Activated CD4-positive, alpha-beta T cell treated with anti-CD3 and anti-CD28 coated beads, Interleukin-2, amount 10 ng/mL, durations not matched to agents 24 days and 14 days (primary cell): ENCODE measurements at regions of chr17 and their contacts with region 1.

Region 1: DNA sequence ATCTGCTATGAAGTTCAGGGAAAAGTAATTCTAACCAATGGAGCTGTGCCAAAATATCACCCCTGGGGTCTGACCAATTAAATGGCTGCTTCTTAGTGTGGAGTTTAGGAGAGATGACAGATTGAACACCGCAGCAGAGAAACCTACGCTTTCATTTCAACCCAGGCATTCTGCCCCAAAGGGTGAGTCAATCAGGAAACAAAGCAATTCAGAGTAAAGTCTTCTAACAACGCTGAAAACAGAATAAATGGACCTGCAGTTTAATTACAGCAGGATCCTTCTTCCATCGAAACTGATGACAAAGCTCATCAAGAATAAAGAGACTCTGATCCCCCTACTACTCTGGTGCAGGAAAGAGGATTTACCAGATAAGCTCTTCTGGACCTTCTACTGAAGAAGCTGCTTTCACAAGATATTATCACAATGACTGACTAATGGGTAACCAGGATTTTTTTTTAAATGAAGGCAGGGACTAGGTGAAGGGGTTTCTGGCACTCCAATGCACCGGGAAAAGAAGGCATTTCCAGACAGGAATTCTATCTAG is 16.7 kb downstream of the RFFL start:
- DNase-seq: peak; percentile 91
- H3K4me3 Mint-ChIP-seq: peak overlapping the region; percentile 63
- H3K27ac Mint-ChIP-seq: peak overlapping the region; percentile 94
- H3K4me1 Mint-ChIP-seq: peaks cover 41% of the 10 kb centered on the region
- H3K27me3 Mint-ChIP-seq: no peaks in the 10 kb centered on the region

Region 2: GRCh38 chr17:35022536-35023063 is 24.2 kb before region 1 on chr17:
- intact Hi-C with region 1: loop called (anchors 1 kb)
- DNase-seq: peak; percentile 91
- H3K4me3 Mint-ChIP-seq: peak overlapping the region; percentile 64
- H3K27ac Mint-ChIP-seq: peak overlapping the region; percentile 95
- H3K4me1 Mint-ChIP-seq: peaks cover 44% of the 10 kb centered on the region
- H3K27me3 Mint-ChIP-seq: no peaks in the 10 kb centered on the region

Region 3: GRCh38 chr17:35073991-35074627 is 27.3 kb after region 1 on chr17:
- intact Hi-C with region 1: loop called (anchors 2 kb)
- DNase-seq: no peak
- H3K4me3 Mint-ChIP-seq: peak overlapping the region; percentile 66
- H3K27ac Mint-ChIP-seq: peak overlapping the region; percentile 91
- H3K4me1 Mint-ChIP-seq: peaks cover 52% of the 10 kb centered on the region
- H3K27me3 Mint-ChIP-seq: no peaks in the 10 kb centered on the region